GM12878 (cell line): ENCODE measurements at regions of chr4 and their contacts with region 1.

Region 1: GRCh38 chr4:71229477-71230270 is 109.1 kb upstream of the SLC4A4 start:
- DNase-seq: no peak
- ATAC-seq: peak; percentile 78
- H3K4me3 ChIP-seq: no peak overlapping the region
- H3K27ac ChIP-seq: no peak overlapping the region
- H3K4me1 ChIP-seq: no peaks in the 10 kb centered on the region
- H3K27me3 ChIP-seq: peaks cover 0 to 2% of the 10 kb centered on the region in 2 experiments; a peak in 2 of 4 replicates
- CTCF ChIP-seq: peak; percentile 40 to 66 (median 66)
- EP300 ChIP-seq: no peak
- POLR2A ChIP-seq: no peak
- RAD21 ChIP-seq: peak; percentile 86

Region 2: DNA sequence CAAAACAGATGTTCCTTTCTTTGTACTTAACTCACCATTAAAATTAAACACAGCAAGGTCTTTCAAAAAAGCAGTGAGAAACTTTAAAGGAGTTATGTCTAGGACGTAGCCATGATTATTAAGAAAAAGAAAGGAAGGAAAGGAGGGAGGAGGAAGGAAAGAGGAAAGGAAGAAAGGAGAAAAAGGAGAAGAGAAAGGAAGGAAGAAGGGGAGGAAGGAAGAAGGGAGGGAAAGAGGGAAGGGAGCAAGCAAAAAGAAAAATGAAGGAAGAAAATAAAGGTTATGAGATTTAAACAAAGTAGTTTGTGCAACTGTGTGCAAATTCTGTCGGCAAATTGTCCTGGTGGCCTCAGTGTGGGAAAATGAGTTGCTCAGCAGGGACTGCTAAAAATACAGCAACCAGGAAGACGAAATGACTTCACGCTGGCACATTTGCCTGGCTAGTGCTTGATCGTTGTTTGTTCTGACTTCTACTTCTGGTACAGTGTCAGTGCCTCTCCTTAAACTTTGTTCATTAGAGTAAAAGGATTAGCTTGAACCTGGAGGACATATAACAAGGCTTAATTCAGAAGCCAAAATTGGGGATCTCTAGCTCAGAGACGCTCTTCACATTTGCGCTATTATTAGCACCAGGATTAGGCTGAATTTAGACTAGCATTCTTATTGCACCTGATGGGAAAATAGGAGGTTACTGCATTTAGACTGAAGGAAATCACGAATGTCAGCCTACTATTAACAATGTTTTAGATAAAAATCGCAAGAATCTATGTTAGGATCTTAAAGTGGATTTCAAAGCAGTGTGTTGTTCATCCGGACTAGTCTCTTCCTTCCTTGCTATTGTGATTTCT is 155.0 kb before region 1 on chr4:
- CTCF ChIA-PET with region 1: no interaction called
- POLR2A ChIA-PET with region 1: no interaction called
- RAD21 ChIA-PET with region 1: no interaction called
- SMC1A ChIA-PET with region 1: no interaction called
- in situ Hi-C with region 1: no loop called
- intact Hi-C with region 1: no loop called
- DNase-seq: no peak
- ATAC-seq: no peak
- H3K4me3 ChIP-seq: no peak overlapping the region
- H3K27ac ChIP-seq: no peak overlapping the region
- H3K4me1 ChIP-seq: no peaks in the 10 kb centered on the region
- H3K27me3 ChIP-seq: no peaks in the 10 kb centered on the region
- CTCF ChIP-seq: no peak
- EP300 ChIP-seq: no peak
- POLR2A ChIP-seq: no peak
- RAD21 ChIP-seq: no peak

Region 3: GRCh38 chr4:71217688-71218087 is 12.0 kb before region 1 on chr4:
- CTCF ChIA-PET with region 1: interaction called, 31 read pairs
- POLR2A ChIA-PET with region 1: no interaction called
- RAD21 ChIA-PET with region 1: interaction called, 4 read pairs
- SMC1A ChIA-PET with region 1: interaction called, 4 read pairs
- in situ Hi-C with region 1: no loop called
- intact Hi-C with region 1: no loop called
- DNase-seq: no peak
- ATAC-seq: no peak
- H3K4me3 ChIP-seq: no peak overlapping the region
- H3K27ac ChIP-seq: no peak overlapping the region
- H3K4me1 ChIP-seq: no peaks in the 10 kb centered on the region
- H3K27me3 ChIP-seq: no peaks in the 10 kb centered on the region; a peak in 1 of 4 replicates
- CTCF ChIP-seq: no peak
- EP300 ChIP-seq: no peak
- POLR2A ChIP-seq: no peak
- RAD21 ChIP-seq: no peak

Region 4: GRCh38 chr4:71241501-71242288 is 12.0 kb after region 1 on chr4:
- CTCF ChIA-PET with region 1: interaction called, 17 read pairs
- POLR2A ChIA-PET with region 1: no interaction called
- RAD21 ChIA-PET with region 1: no interaction called
- SMC1A ChIA-PET with region 1: interaction called, 3 read pairs
- in situ Hi-C with region 1: no loop called
- intact Hi-C with region 1: no loop called
- DNase-seq: no peak
- ATAC-seq: no peak
- H3K4me3 ChIP-seq: no peak overlapping the region
- H3K27ac ChIP-seq: no peak overlapping the region
- H3K4me1 ChIP-seq: no peaks in the 10 kb centered on the region
- H3K27me3 ChIP-seq: no peaks in the 10 kb centered on the region
- CTCF ChIP-seq: no peak
- EP300 ChIP-seq: no peak
- POLR2A ChIP-seq: no peak
- RAD21 ChIP-seq: no peak

Region 5: GRCh38 chr4:71254451-71255012 is 24.9 kb after region 1 on chr4:
- CTCF ChIA-PET with region 1: interaction called, 12 read pairs
- POLR2A ChIA-PET with region 1: no interaction called
- RAD21 ChIA-PET with region 1: interaction called, 7 read pairs
- SMC1A ChIA-PET with region 1: interaction called, 15 read pairs
- in situ Hi-C with region 1: no loop called
- intact Hi-C with region 1: no loop called
- DNase-seq: no peak
- ATAC-seq: peak; percentile 86
- H3K4me3 ChIP-seq: no peak overlapping the region
- H3K27ac ChIP-seq: no peak overlapping the region
- H3K4me1 ChIP-seq: no peaks in the 10 kb centered on the region
- H3K27me3 ChIP-seq: no peaks in the 10 kb centered on the region
- CTCF ChIP-seq: no peak; a peak in 1 of 6 replicates
- EP300 ChIP-seq: no peak
- POLR2A ChIP-seq: no peak
- RAD21 ChIP-seq: peak; percentile 55; the same call in 1 of the 2 replicates

Region 6: GRCh38 chr4:71553605-71554004 is 323.9 kb after region 1 on chr4:
- CTCF ChIA-PET with region 1: interaction called, 6 read pairs
- POLR2A ChIA-PET with region 1: no interaction called
- RAD21 ChIA-PET with region 1: no interaction called
- SMC1A ChIA-PET with region 1: interaction called, 3 read pairs
- in situ Hi-C with region 1: no loop called
- intact Hi-C with region 1: loop called (anchors 5 kb)
- DNase-seq: no peak
- ATAC-seq: peak; percentile 66
- H3K4me3 ChIP-seq: no peak overlapping the region
- H3K27ac ChIP-seq: no peak overlapping the region
- H3K4me1 ChIP-seq: no peaks in the 10 kb centered on the region
- H3K27me3 ChIP-seq: no peaks in the 10 kb centered on the region; a peak in 1 of 4 replicates
- CTCF ChIP-seq: peak in 2 of 3 experiments; percentile 37 to 39; a peak in 3 of 6 replicates
- EP300 ChIP-seq: no peak
- POLR2A ChIP-seq: no peak
- RAD21 ChIP-seq: peak; percentile 69

Region 7: DNA sequence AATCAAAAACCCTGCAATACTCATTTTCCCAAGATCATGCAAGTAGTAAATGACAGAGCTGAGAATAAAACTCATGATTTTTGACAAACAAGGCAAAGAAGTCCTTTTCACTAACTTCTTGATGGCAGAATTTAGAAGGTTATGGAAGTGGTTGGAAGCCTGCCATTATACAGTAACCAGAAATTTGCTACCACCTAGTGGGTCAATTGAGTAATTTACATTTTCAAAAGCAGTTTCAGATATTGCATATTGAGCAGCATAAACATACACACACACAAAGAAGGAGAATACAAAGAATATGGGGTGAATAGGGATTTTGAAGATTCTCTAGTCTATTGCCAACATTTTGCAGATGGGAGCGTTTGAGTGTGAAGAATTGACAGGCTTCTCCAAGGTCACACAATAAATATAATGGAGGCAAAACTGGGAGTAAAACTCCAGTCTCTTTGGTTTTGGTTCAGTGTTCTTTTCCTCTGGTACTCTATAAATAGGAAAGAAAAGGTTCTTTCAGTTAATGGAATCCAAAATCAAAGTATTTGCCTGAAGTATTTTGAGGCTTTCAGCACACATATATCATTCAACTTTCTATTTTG is 484.0 kb after region 1 on chr4:
- CTCF ChIA-PET with region 1: interaction called, 34 read pairs
- POLR2A ChIA-PET with region 1: no interaction called
- RAD21 ChIA-PET with region 1: interaction called, 3 read pairs
- SMC1A ChIA-PET with region 1: interaction called, 4 read pairs
- in situ Hi-C with region 1: no loop called
- intact Hi-C with region 1: loop called (anchors 1 kb)
- DNase-seq: no peak
- ATAC-seq: peak; percentile 70
- H3K4me3 ChIP-seq: no peak overlapping the region
- H3K27ac ChIP-seq: no peak overlapping the region
- H3K4me1 ChIP-seq: no peaks in the 10 kb centered on the region
- H3K27me3 ChIP-seq: no peaks in the 10 kb centered on the region
- CTCF ChIP-seq: peak; percentile 33 to 66 (median 46); a peak in 5 of 6 replicates
- EP300 ChIP-seq: no peak
- POLR2A ChIP-seq: no peak
- RAD21 ChIP-seq: peak; percentile 86